Activated CD4-positive, alpha-beta T cell treated with anti-CD3 and anti-CD28 coated beads for 36 hours (primary cell): ENCODE measurements at regions of chr6 and their contacts with region 1.

Region 1: GRCh38 chr6:106608062-106608668 is 21.1 kb downstream of the RTN4IP1 start:
- DNase-seq: peak; percentile 19
- ATAC-seq: peak; percentile 86
- H3K4me3 Mint-ChIP-seq: no peak overlapping the region
- H3K27ac Mint-ChIP-seq: no peak overlapping the region
- H3K4me1 Mint-ChIP-seq: peaks cover 8% of the 10 kb centered on the region
- H3K27me3 Mint-ChIP-seq: no peaks in the 10 kb centered on the region

Region 2: DNA sequence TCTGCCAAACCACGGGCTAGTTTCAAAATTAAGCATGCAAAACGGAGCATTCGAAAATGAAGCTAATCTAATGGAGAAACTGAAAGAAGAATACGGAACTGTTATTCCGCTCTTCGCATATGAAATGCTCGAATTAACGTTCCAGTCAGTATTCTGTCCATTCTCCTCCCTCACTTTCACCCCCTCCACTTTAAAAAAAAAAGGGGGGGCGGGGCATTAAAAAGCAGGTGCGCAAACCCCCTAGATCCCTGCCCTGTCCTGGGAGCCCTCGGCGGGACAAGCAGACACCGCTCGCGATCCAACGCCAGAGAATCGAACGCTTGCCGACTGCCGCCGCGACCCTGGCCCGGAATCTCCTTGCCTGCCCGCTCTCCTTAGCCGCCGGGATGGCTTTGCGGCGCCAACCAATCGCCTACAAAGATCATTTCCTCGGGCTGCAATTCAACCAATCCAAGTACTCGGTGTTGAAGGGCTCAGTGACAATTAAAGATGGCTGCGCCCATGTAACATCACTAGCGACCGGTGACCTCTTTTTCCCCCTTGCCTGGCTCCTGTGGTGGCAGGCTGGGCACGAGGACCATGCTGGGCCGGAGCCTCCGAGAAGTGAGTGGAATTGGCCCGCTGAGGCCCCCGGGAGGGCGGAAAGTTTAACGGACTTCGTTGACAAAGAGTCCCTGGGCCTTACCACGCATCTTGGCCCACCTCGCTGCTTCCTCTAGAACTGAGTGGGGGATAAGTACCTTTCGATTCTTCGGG is 21.1 kb after region 1 on chr6 and contains the starts of genes QRSL1 and RTN4IP1:
- CTCF ChIA-PET with region 1: interaction called, 7 read pairs
- POLR2A ChIA-PET with region 1: no interaction called
- intact Hi-C with region 1: loop called in 1 of 2 experiments (anchors 1 kb)
- DNase-seq: peak; percentile 90
- ATAC-seq: peak; percentile 91
- H3K4me3 Mint-ChIP-seq: peak within 1 kb of the TSS; percentile 97
- H3K27ac Mint-ChIP-seq: peak within 1 kb of the TSS; percentile 98
- H3K4me1 Mint-ChIP-seq: peaks cover 28% of the 10 kb centered on the region
- H3K27me3 Mint-ChIP-seq: no peaks in the 10 kb centered on the region
- total RNA-seq, gene QRSL1: 15.8 to 17.9 TPM
- total RNA-seq, gene RTN4IP1: 4.8 to 9.3 TPM

Region 3: GRCh38 chr6:106658469-106658868 is 50.3 kb after region 1 on chr6:
- CTCF ChIA-PET with region 1: no interaction called
- POLR2A ChIA-PET with region 1: no interaction called
- intact Hi-C with region 1: no loop called
- DNase-seq: no peak
- ATAC-seq: no peak
- H3K4me3 Mint-ChIP-seq: no peak overlapping the region
- H3K27ac Mint-ChIP-seq: no peak overlapping the region
- H3K4me1 Mint-ChIP-seq: no peaks in the 10 kb centered on the region
- H3K27me3 Mint-ChIP-seq: no peaks in the 10 kb centered on the region